Lower leg skin (tissue), 4 donors: ENCODE measurements at regions of chr9 and their contacts with region 1.

Region 1: GRCh38 chr9:8494571-8494970 is 695.0 kb upstream of the DMAC1 start:
- DNase-seq: no peak
- H3K4me3 ChIP-seq: no peak overlapping the region
- CTCF ChIP-seq: no peak
- POLR2A ChIP-seq: no peak

Region 2: DNA sequence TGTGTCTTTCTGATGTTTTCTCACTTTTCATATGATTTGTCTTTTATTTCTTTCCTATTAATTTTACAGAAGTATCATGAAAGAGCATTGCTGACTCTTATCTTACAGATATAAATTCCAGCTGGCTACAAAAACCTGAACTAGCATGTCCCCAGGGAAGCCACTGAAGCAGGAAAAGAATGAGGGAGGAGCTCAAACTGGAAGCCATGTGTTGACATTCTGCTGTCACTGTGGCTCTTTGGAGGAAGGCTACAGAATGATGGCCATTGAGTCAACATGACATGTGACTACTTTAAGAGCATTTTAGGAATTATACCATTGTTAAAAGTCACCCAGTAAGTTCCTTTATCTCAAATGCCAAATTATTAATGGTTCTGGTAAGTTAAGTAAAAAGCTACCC is 56.7 kb before region 1 on chr9:
- intact Hi-C with region 1: loop called (anchors 2 kb)
- DNase-seq: no peak
- H3K4me3 ChIP-seq: no peak overlapping the region
- CTCF ChIP-seq: no peak
- POLR2A ChIP-seq: no peak